Heart right ventricle (tissue), 16 donors: ENCODE measurements at regions of chr9 and their contacts with region 1.

Region 1: DNA sequence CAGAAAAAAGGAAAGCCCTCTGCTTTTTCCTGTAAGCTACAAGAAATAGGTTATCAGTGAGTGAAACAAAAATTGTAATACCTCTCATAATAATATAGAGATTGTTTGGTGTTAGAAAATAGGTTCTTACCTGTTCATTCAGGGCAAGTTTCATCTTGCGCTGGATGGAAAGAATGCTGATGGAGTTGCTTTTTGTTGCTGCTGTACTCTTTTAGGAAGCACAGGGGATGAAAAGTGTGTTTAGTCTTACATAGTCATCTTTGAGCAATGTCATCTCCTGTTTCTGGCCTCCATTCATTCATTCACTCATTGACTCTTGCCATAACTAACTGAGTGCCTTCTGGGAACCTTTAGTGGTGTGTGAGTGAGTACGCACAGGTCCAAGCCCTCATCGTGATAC is 6.4 kb downstream of the ENTREP1 start:
- DNase-seq: no peak
- ATAC-seq: no peak
- H3K4me3 ChIP-seq: no peak overlapping the region
- H3K27ac ChIP-seq: no peak overlapping the region
- H3K4me1 ChIP-seq: peaks cover 0 to 15% (median 5%) of the 10 kb centered on the region in 9 donors
- H3K27me3 ChIP-seq: peaks cover 0 to 17% (median 0%) of the 10 kb centered on the region in 7 donors
- CTCF ChIP-seq: no peak

Region 2: GRCh38 chr9:69370430-69370829 is 39.0 kb after region 1 on chr9:
- intact Hi-C with region 1: loop called in 3 of 10 experiments (anchors 5 kb)
- DNase-seq: no peak
- ATAC-seq: no peak
- H3K4me3 ChIP-seq: no peak overlapping the region
- H3K27ac ChIP-seq: peak overlapping the region in 2 of 10 donors; percentile 2 to 23
- H3K4me1 ChIP-seq: peaks cover 1 to 51% (median 22%) of the 10 kb centered on the region in 9 donors
- H3K27me3 ChIP-seq: no peaks in the 10 kb centered on the region
- CTCF ChIP-seq: no peak